ENCODE measurements at regions of chr7 and their contacts with region 1.

Region 1: DNA sequence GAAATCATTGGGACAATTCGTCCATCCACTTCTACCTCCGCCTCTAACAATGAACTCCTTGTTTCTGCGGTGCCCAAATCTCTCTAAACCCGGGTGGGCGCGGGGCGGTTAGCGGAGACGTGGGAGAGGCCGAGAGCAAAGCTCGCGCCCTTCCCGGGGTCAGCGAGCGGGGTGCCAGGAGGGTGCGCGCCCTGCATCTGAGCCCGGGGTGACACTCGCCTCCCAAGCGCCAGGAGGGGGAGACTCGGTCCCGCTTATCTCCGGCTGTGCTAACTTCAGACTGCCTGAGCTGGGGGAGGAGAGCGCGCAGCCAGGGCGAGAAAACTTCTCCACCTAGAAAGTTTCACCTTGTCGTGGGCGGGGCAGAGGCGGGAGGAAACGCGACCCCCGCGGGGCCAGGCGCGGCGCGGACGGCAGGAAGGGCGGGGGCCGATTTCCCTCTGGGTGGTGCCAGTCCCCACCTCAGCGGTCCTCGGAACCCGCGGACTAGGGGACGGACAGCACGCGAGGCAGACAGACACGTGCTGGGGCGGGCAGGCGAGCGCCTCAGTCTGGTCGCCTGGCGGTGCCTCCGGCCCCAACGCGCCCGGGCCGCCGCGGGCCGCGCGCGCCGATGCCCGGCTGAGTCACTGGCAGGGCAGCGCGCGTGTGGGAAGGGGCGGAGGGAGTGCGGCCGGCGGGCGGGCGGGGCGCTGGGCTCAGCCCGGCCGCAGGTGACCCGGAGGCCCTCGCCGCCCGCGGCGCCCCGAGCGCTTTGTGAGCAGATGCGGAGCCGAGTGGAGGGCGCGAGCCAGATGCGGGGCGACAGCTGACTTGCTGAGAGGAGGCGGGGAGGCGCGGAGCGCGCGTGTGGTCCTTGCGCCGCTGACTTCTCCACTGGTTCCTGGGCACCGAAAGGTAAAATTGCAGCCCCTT is at the start of gene MET:
- DNase-seq: peak; percentile 22 to 96 (median 64)

Region 2: GRCh38 chr7:116478834-116479233 is 193.1 kb before region 1 on chr7:
- intact Hi-C with region 1: no loop called
- DNase-seq: no peak

Region 3: GRCh38 chr7:116490351-116490750 is 181.6 kb before region 1 on chr7:
- intact Hi-C with region 1: no loop called
- DNase-seq: no peak

Region 4: GRCh38 chr7:116598278-116598677 is 73.7 kb before region 1 on chr7:
- intact Hi-C with region 1: loop called (anchors 5 kb)
- DNase-seq: peak in 5 of 10 donors; percentile 10 to 85 (median 51)

Region 5: DNA sequence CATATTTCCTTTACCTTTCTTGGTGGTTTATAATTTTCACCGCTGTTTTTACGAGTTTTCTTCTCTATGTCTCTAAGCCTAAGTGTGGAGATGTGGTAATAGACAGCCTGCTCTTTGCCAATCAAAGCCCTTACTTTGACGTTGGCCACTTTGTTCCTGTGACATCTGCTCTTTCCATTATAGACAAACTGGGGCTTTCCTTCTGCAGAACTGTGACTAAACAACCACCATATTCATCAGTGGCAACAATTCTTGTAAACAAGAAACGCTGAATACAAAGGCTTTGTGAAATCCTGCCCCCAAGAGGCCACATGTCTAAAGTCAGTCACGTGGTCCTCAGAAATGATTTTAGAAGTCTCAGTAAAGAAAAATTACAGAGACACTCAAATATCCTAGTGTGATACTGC is 130.8 kb after region 1 on chr7:
- intact Hi-C with region 1: loop called (anchors 2 kb)
- DNase-seq: peak in 3 of 10 donors; percentile 17 to 47 (median 47)

Region 6: DNA sequence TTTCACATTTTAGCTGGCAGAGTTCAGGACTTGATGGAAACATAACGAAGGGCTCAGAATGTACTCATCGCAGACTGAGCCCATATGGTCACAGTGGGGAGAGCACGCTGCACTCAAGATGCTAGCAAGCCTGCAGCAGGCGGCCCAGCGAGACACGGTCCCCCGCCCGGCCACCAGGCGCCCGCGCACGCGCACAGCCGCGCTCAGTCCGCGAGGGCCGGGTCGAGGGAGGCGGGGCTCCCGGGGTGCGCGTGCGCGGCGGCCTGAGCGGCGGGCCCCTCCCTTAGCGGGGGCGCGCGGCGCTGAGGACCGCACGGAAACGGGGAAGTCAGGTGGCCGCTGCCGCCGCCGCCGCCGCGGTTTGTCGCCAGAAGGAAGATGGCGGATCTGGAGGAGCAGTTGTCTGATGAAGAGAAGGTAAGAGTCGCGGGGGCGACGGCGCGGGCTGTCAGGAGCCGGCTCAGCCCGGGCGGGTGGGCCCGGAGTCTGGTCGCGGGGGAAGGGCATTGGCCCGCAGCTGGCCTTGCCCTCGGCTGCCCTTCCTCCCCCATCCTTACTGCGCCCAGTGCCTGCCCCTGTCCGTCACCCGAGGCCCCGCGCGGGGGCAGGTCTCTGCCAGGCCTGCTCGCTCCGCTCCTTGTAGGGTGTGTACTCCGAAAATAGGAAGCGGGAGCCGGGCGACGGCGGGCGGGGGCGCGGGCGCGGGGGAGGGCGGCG is 190.5 kb after region 1 on chr7 and contains the start of gene CAPZA2:
- intact Hi-C with region 1: no loop called
- DNase-seq: peak; percentile 82 to 99 (median 88)

Measured in posterior cingulate gyrus (tissue), 11 donors.